ENCODE measurements at regions of chr2 and their contacts with region 1.

Region 1: DNA sequence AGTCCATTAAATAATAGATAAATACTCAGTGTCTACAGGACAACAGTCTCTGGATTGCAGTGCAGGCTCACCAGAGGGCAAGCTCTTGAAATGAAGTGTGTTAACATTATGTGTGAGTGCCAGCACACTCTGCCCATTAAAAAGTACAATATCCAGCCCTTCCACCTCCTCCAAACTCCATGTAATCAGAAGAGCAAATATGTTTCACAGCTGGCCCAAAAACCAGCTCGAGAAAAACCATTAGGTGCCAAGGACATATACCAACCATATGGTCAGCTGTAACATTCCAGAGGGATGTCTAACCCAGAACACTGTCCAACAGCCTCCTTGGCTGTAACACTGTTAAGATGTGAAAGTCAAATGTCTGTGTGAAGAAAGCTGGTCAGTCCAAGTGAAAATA is 112.2 kb downstream of the ZNF385B start:
- DNase-seq: no peak
- ATAC-seq: peak; percentile 66
- H3K4me3 ChIP-seq: no peak overlapping the region
- H3K27ac ChIP-seq: no peak overlapping the region
- H3K4me1 ChIP-seq: peaks cover 19% of the 10 kb centered on the region
- H3K27me3 ChIP-seq: no peaks in the 10 kb centered on the region
- CTCF ChIP-seq: no peak

Region 2: GRCh38 chr2:179422037-179422643 is 327.1 kb before region 1 on chr2:
- intact Hi-C with region 1: loop called (anchors 10 kb)
- DNase-seq: peak; percentile 74
- ATAC-seq: peak; percentile 89
- H3K4me3 ChIP-seq: no peak overlapping the region
- H3K27ac ChIP-seq: no peak overlapping the region
- H3K4me1 ChIP-seq: no peaks in the 10 kb centered on the region
- H3K27me3 ChIP-seq: no peaks in the 10 kb centered on the region
- CTCF ChIP-seq: peak; percentile 79